ENCODE measurements at regions of chr18 and their contacts with region 1.

Region 1: DNA sequence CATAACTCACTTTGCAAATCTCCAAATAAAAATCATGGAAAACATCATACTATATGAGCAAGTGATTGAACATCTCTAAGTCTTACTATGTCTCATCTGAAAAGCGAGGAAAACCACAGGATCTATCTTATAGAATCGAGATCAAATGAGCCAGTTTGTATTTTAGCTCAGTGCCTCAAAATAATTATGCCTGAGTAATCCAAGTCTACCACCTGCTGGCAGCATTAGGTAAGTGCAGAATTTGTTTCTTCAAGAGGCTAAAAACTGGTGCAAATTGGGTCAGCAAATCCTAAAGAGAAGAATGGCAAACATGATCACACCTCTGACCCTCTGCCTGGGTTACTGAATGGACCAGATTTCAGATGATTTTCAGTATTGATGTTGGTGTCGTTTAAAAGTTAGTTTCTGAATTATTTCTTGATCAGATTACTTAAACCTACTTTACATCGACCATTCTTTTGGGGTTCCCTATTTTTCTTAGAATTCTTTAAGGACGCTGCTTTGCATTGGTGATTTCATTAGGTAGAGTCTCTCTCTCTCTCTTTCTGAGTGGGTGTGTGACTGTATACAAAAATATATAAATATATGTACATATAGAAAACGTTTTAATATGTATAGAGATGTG is 12.7 kb upstream of the FHOD3 start:
- DNase-seq: peak; percentile 53
- CTCF ChIP-seq: peak; percentile 84

Region 2: DNA sequence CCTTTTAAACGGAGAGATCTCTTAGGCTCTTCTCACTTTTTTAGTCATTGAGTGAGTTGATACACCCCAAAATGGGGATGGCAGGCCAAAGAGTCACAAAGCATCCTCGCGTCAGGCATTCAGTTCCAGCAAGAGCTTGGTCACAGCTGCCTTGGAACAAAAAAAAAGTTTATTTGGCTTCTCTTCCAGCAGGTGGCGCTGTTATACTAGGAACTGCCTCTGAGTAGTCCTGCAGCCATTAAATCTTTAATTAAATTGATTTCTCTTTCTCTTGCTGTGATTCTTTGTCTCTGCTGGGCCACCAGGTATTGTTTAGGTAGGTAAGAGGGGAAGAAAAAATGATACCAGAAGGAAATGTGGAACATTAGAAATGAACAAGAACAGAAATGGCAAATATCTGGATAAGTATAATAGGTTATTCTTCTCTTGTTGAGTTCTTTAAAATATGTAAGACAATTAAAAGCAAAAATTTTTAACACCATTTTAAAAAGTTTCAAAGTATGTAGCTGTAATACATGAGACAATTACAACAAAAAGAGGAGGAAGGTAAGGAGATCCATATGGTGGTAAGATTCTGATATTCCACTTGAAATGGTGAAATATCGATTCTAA is 528.2 kb before region 1 on chr18:
- CTCF ChIA-PET with region 1: interaction called, 13 read pairs
- POLR2A ChIA-PET with region 1: no interaction called
- DNase-seq: peak; percentile 69
- CTCF ChIP-seq: peak; percentile 71

Region 3: DNA sequence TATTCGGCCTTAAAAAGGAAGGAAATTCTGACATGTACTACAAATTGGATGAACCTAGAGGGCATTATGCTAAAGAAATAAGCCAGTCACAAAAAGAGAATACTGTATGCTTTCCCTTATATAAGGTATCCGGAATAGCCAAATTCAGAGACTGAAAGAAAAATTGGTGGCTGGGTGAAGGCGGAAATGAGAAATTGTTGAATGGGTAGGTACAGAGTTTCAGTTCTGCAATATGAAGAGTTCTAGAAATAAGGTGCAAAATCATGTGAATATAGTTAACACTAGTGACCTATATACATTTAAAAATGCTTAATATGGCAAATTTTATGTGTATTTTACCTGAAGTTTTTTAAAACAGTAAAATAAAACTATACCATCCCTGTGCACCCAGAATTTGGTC is 269.2 kb before region 1 on chr18:
- CTCF ChIA-PET with region 1: interaction called, 109 read pairs
- POLR2A ChIA-PET with region 1: no interaction called
- DNase-seq: peak; percentile 55
- CTCF ChIP-seq: no peak

Region 4: GRCh38 chr18:36095936-36096519 is 188.8 kb before region 1 on chr18:
- CTCF ChIA-PET with region 1: interaction called, 124 read pairs
- POLR2A ChIA-PET with region 1: no interaction called
- DNase-seq: peak; percentile 42
- CTCF ChIP-seq: peak; percentile 34

Region 5: DNA sequence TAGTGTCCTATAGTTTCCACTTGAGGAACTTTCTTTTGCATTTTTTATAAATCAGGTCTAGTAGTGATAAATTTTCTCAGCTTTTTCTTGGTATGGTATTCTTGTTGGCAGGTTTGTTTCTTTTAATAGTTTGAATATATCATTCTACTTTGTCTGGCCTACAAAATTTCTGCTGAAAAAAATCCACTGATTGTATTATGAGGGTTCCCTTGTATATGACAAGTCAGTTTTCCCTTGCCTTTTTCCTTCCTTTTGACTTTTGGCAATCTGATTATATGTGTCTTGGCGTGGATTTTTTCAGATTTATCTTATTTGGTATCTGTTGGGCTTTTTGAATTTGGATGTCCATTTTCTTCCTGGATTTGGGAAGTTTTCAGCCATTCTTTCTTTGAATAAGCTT is 55.6 kb before region 1 on chr18:
- CTCF ChIA-PET with region 1: no interaction called
- POLR2A ChIA-PET with region 1: no interaction called
- DNase-seq: no peak
- CTCF ChIP-seq: no peak

Region 6: GRCh38 chr18:36296650-36297416 is 12.1 kb after region 1 on chr18:
- CTCF ChIA-PET with region 1: interaction called, 36 read pairs
- POLR2A ChIA-PET with region 1: no interaction called
- DNase-seq: peak; percentile 44
- CTCF ChIP-seq: peak; percentile 55

Region 7: GRCh38 chr18:36309436-36310391 is 24.9 kb after region 1 on chr18:
- CTCF ChIA-PET with region 1: no interaction called
- POLR2A ChIA-PET with region 1: no interaction called
- DNase-seq: no peak
- CTCF ChIP-seq: no peak

Region 8: GRCh38 chr18:36481201-36481657 is 196.4 kb after region 1 on chr18:
- CTCF ChIA-PET with region 1: no interaction called
- POLR2A ChIA-PET with region 1: no interaction called
- DNase-seq: no peak
- CTCF ChIP-seq: no peak

Measured in GM10248 (cell line).